Endothelial cell of umbilical vein (primary cell): ENCODE measurements at regions of chr22 and their contacts with region 1.

Region 1: GRCh38 chr22:45263463-45264269 is 21.1 kb upstream of the UPK3A start:
- DNase-seq: peak; percentile 61
- H3K4me3 ChIP-seq: no peak overlapping the region
- H3K27ac ChIP-seq: no peak overlapping the region
- H3K4me1 ChIP-seq: peaks cover 1% of the 10 kb centered on the region
- H3K27me3 ChIP-seq: peaks cover 0 to 7% of the 10 kb centered on the region in 2 experiments
- CTCF ChIP-seq: peak; percentile 78 to 88
- POLR2A ChIP-seq: no peak

Region 2: DNA sequence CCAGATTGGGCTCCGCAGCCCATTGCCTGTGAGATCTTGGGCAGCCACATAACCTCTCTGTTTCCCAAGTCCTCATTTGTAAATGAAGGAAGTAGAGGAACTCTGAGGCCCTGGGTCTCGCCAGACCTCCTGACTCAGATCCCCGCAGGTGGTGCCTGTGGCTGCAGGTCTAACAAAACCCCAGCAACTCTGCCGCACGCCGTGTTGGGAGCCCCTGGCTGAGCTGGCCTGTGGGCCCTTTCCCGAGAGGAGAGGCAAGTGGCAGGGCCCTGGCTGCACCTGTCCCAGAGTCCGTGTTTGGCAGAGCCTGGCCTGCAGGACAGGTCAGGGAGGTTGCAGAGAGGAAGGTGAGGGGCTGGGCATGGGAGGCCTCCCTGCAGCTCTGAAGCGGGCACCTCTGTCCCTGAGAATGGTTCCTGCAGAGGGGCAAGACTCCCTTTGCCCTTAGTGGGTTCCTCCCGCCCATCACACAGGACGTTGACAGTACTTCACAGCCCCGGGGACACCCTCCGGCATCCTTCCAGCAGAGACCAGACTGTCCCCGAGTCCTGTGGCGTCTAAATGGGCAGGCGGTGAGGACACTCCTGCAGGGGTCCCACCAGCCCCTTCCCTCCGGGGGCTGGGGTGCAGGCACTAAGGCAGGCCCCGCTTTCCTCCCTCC is 443.6 kb before region 1 on chr22:
- CTCF ChIA-PET with region 1: no interaction called
- POLR2A ChIA-PET with region 1: no interaction called
- dilution Hi-C with region 1: no loop called
- intact Hi-C with region 1: loop called (anchors 2 kb)
- DNase-seq: no peak
- H3K4me3 ChIP-seq: no peak overlapping the region
- H3K27ac ChIP-seq: no peak overlapping the region
- H3K4me1 ChIP-seq: no peaks in the 10 kb centered on the region
- H3K27me3 ChIP-seq: no peaks in the 10 kb centered on the region
- CTCF ChIP-seq: no peak
- POLR2A ChIP-seq: no peak

Region 3: DNA sequence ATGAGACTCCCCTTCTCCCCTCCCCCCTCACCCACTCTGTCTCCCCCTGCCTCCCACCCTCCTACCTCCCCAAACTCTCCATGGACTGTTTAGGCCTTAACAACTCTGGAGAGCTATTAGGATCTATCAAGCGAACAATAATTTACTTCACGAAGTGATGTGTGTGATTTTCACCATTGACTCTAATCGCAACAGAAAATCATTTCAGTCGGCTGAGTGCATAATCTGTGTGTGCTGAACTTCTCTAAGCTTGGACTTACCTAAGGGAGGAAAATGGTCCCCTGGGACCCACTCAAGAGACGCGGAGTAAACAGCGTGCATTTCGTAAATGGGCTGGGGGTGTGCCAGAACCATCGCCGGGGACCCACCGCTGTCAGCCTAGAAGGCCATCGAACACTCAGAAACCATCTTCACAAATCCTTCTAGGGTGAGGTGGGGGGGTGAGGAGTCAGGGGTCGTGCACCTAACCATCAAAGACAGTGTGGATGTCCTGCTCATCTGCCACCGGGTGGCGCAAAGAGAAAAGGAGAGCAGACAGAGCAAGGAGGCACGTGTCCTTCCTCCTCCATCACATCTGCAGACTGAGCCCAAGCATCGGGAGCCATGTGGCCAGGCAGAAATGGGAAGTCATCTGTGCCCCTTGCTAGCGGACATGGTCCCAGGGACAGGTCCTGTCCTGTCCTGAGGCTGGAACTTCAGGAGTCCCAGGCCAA is 162.0 kb before region 1 on chr22:
- CTCF ChIA-PET with region 1: interaction called, 9 read pairs
- POLR2A ChIA-PET with region 1: no interaction called
- dilution Hi-C with region 1: no loop called
- intact Hi-C with region 1: loop called (anchors 1 kb)
- DNase-seq: peak; percentile 30
- H3K4me3 ChIP-seq: no peak overlapping the region
- H3K27ac ChIP-seq: no peak overlapping the region
- H3K4me1 ChIP-seq: no peaks in the 10 kb centered on the region
- H3K27me3 ChIP-seq: peaks cover 0 to 3% of the 10 kb centered on the region in 2 experiments
- CTCF ChIP-seq: peak in 1 of 2 donors; percentile 31
- POLR2A ChIP-seq: no peak

Region 4: DNA sequence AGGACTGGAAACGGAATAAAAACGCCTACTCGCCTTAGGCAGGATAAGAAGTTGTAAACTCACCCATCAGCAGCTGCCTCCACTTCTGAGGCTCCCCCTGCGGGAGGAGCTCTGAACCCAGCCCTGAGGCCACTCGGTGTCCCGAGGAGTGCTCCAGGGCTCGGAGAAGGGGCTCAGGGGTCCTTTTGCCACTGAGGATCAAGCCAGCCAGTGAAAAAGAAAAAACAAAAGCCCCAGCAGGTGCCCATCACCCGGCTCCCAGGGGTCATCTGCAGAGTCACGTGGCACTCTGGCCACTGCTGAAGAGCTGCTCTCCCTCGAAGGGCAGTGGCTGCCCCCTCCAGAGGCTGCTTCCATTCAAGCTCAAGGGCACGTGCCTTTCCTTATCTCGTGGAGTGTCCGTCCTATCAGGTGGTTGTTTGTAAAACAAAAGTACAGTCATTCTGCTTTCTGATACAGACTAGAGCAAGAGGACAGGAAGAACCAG is 70.9 kb before region 1 on chr22:
- CTCF ChIA-PET with region 1: interaction called, 3 read pairs
- POLR2A ChIA-PET with region 1: no interaction called
- dilution Hi-C with region 1: no loop called
- intact Hi-C with region 1: loop called (anchors 1 kb)
- DNase-seq: no peak
- H3K4me3 ChIP-seq: no peak overlapping the region
- H3K27ac ChIP-seq: no peak overlapping the region
- H3K4me1 ChIP-seq: no peaks in the 10 kb centered on the region
- H3K27me3 ChIP-seq: no peaks in the 10 kb centered on the region
- CTCF ChIP-seq: no peak
- POLR2A ChIP-seq: no peak

Region 5: DNA sequence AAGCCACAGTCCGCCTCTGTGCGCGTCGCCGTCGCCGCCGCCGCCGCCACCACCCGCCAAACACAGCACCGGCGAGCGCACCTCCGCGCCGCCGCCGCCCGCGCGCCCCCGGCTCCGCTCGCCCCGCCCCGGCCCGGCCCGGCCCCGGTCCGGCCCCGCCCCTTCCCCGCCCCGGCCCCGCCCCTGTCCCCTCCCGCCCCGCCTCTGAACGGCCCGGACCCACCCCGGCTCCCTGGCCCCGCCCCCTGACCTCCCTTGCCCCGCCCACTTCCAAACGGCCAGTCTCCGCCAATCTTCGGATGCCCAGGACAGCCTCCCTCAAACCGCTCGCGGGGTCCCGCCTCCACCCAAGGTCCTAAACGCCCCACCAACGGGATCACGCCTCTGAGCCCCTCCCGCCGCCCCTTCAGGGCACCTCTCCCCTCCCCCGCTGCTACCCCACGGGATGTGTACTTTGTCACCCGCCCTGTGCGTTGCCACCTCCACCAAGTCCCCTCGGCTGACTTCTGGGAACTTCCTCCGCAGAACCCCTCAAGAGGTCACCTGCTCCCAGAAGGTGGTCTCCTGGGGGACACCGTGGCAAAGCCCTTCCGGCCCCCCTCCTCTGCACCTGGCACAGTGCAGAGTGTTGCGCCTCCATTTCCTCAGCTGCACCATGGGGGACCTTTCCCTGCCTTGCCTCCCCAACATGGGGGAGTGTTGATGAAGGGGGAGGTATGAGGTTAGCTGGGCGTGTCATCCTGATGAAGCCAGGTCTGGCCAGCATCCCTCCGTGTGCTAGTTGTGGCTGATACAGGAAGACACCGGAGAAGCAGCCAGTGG is 22.6 kb before region 1 on chr22 and contains the start of gene KIAA0930:
- CTCF ChIA-PET with region 1: interaction called, 8 read pairs
- POLR2A ChIA-PET with region 1: no interaction called
- dilution Hi-C with region 1: no loop called
- intact Hi-C with region 1: loop called (anchors 1 kb)
- DNase-seq: peak; percentile 50
- H3K4me3 ChIP-seq: peak within 1 kb of the TSS; percentile 63 to 70 (median 68)
- H3K27ac ChIP-seq: no peak within 1 kb of the TSS
- H3K4me1 ChIP-seq: peaks cover 12% of the 10 kb centered on the region
- H3K27me3 ChIP-seq: no peaks in the 10 kb centered on the region
- CTCF ChIP-seq: no peak
- POLR2A ChIP-seq: no peak
- total RNA-seq, gene KIAA0930: 37.9 and 43.4 TPM in 2 replicates

Region 6: GRCh38 chr22:45276507-45277105 is 12.9 kb after region 1 on chr22:
- CTCF ChIA-PET with region 1: no interaction called
- POLR2A ChIA-PET with region 1: no interaction called
- dilution Hi-C with region 1: no loop called
- intact Hi-C with region 1: no loop called
- DNase-seq: no peak
- H3K4me3 ChIP-seq: no peak overlapping the region
- H3K27ac ChIP-seq: no peak overlapping the region
- H3K4me1 ChIP-seq: peaks cover 10% of the 10 kb centered on the region
- H3K27me3 ChIP-seq: no peaks in the 10 kb centered on the region
- CTCF ChIP-seq: no peak
- POLR2A ChIP-seq: no peak